GM23248 (cell line): ENCODE measurements at regions of chr12 and their contacts with region 1.

Region 1: GRCh38 chr12:130335517-130336392 is 1.9 kb upstream of the PIWIL1 start:
- DNase-seq: peak; percentile 64
- H3K4me3 ChIP-seq: no peak overlapping the region
- H3K27ac ChIP-seq: no peak overlapping the region
- H3K4me1 ChIP-seq: no peaks in the 10 kb centered on the region
- H3K27me3 ChIP-seq: no peaks in the 10 kb centered on the region; the same call in 1 of the 2 replicates

Region 2: GRCh38 chr12:129887117-129887516 is 448.6 kb before region 1 on chr12:
- in situ Hi-C with region 1: no loop called
- DNase-seq: no peak
- H3K4me3 ChIP-seq: no peak overlapping the region
- H3K27ac ChIP-seq: no peak overlapping the region
- H3K4me1 ChIP-seq: no peaks in the 10 kb centered on the region
- H3K27me3 ChIP-seq: no peaks in the 10 kb centered on the region

Region 3: DNA sequence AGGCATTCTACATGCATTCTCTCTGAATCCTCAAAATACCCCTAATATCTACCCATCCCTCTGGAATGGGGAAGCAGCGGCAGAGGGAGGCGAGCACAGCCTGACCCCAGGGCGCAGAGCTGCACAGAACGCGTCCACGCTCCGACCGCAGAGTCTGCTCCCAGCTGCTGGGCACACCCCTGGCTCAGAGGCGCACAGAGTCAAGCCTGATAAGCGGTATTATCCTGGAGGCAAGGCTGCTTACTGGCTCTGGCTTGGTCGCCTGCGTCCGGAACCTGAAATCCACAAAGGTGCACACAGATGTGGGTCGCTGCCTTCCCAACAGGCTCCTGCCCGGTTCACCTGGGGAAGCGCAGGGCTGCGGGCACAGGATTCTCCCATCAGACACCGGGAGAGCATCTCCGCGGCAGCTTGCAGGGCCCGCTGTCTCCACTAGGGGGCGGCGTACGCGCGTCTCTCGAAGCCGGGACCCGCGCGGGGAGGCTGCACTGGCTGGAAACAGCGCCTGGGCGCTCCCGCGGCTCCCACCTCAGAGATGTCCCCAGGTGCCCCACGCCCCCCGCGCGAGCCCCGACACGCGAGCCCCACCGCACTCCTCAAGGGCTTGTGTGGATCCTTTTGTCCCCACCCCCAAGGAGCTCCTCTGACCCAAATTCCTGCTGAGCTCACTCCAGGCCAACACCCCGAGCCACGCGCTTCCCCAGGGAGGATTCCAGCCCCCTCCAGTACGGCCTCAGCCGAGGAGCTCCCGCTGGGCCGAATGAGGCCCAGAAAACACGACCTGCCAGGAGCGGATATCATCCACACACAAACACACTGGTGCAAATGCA is 293.6 kb before region 1 on chr12:
- in situ Hi-C with region 1: loop called (anchors 10 kb)
- DNase-seq: peak; percentile 19
- H3K4me3 ChIP-seq: no peak overlapping the region
- H3K27ac ChIP-seq: no peak overlapping the region
- H3K4me1 ChIP-seq: no peaks in the 10 kb centered on the region
- H3K27me3 ChIP-seq: no peaks in the 10 kb centered on the region

Region 4: DNA sequence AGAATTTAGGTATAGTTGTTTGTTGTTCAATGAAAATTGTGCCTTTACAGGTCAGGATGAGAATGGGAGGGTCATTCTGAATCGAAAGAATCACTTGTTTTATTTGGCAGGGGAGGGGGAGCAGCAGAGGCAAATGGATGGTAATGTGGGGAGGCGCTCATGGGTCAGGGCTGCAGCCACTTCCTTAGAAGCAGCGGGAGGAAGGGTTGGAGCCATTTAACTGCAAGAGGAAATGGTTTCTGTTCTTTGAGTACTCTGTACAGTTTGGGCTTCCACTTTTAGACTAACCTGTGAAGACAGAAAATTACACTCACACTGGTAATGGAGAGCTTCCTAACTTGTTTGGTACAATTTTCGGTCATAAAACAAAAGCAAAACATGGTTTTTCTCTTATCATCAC is 59.2 kb after region 1 on chr12:
- in situ Hi-C with region 1: no loop called
- DNase-seq: no peak
- H3K4me3 ChIP-seq: no peak overlapping the region
- H3K27ac ChIP-seq: no peak overlapping the region
- H3K4me1 ChIP-seq: no peaks in the 10 kb centered on the region
- H3K27me3 ChIP-seq: no peaks in the 10 kb centered on the region

Region 5: GRCh38 chr12:130761537-130762318 is 426.0 kb after region 1 on chr12:
- in situ Hi-C with region 1: no loop called
- DNase-seq: peak; percentile 76
- H3K4me3 ChIP-seq: no peak overlapping the region
- H3K27ac ChIP-seq: no peak overlapping the region
- H3K4me1 ChIP-seq: no peaks in the 10 kb centered on the region
- H3K27me3 ChIP-seq: no peaks in the 10 kb centered on the region